Common myeloid progenitor, CD34-positive (primary cell): ENCODE measurements at regions of chr12 and their contacts with region 1.

Region 1: GRCh38 chr12:45268672-45269411 is 52.9 kb downstream of the ANO6 start:
- DNase-seq: peak; percentile 34 to 73 (median 64)
- H3K4me3 ChIP-seq: peak overlapping the region in 2 of 7 experiments; percentile 46 to 58
- H3K27ac ChIP-seq: no peak overlapping the region
- H3K4me1 ChIP-seq: peaks cover 6 to 17% (median 11%) of the 10 kb centered on the region in 4 experiments
- H3K27me3 ChIP-seq: no peaks in the 10 kb centered on the region

Region 2: DNA sequence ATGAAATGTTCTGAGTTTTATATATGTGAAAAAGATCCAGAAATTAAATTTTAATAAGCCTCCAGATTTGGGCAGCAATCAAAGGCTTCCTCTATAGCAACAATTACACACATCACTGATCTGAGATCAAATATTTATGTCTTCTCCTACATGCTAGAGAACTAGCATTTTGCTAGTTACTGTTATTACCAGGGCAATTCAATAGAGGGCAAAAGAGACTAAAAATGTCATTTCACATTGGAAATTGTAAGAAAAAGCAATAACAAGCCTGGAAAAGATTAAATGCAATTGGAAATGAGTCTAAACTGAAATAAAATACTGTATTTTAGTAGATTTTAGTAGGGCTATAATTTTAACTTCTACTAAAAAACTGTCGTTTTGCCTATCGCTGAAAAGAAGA is 85.6 kb before region 1 on chr12:
- CTCF ChIA-PET with region 1: interaction called, 10 read pairs
- POLR2A ChIA-PET with region 1: no interaction called
- DNase-seq: peak in 2 of 3 donors; percentile 9 to 29
- H3K4me3 ChIP-seq: no peak overlapping the region
- H3K27ac ChIP-seq: no peak overlapping the region
- H3K4me1 ChIP-seq: peaks cover 0 to 4% (median 0%) of the 10 kb centered on the region in 4 experiments
- H3K27me3 ChIP-seq: no peaks in the 10 kb centered on the region